Aorta (tissue), 5 donors: ENCODE measurements at regions of chr13 and their contacts with region 1.

Region 1: GRCh38 chr13:80363890-80364503 is 23.1 kb upstream of the SPRY2 start:
- DNase-seq: no peak
- ATAC-seq: no peak
- H3K4me3 ChIP-seq: no peak overlapping the region
- H3K27ac ChIP-seq: no peak overlapping the region
- H3K4me1 ChIP-seq: no peaks in the 10 kb centered on the region
- H3K27me3 ChIP-seq: no peaks in the 10 kb centered on the region

Region 2: DNA sequence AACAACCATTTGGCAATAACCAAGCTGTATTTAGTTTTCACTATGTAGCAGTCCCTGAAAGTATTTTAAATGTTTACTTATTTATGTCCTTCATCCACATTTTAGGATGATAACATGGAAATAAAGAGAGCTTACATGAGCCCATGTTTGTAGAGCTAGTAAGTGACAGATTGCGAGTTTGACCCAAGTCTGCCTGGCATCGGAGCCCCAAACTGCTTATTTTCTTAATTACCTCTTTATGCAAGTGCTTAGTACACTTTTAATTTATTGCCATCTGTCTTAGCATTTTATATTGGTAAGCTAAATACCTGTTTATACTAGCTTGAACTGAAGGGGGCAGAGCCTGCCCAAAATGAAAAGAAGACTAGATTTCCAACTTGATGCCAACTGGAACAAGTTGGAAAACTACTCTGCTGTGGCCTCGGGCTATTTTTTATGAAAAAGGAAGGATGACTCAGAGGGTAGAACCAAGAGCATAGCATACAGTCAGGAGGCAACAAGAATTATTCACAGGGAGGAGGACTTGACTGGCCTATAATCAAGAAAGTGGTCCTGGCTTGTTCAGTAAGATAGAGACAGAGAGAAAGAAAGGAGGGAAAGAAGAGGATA is 732.8 kb before region 1 on chr13:
- intact Hi-C with region 1: loop called in 1 of 2 experiments (anchors 10 kb)
- DNase-seq: no peak
- ATAC-seq: no peak
- H3K4me3 ChIP-seq: no peak overlapping the region
- H3K27ac ChIP-seq: no peak overlapping the region
- H3K4me1 ChIP-seq: peaks cover 0 to 2% of the 10 kb centered on the region in 2 donors
- H3K27me3 ChIP-seq: no peaks in the 10 kb centered on the region

Region 3: GRCh38 chr13:79679334-79679733 is 684.7 kb before region 1 on chr13:
- intact Hi-C with region 1: loop called (anchors 10 kb)
- DNase-seq: peak; percentile 73 to 82
- ATAC-seq: peak; percentile 82
- H3K4me3 ChIP-seq: no peak overlapping the region
- H3K27ac ChIP-seq: no peak overlapping the region
- H3K4me1 ChIP-seq: peaks cover 0 to 1% of the 10 kb centered on the region in 2 donors
- H3K27me3 ChIP-seq: no peaks in the 10 kb centered on the region

Region 4: GRCh38 chr13:79775830-79776229 is 588.2 kb before region 1 on chr13:
- intact Hi-C with region 1: loop called (anchors 5 kb)
- DNase-seq: no peak
- ATAC-seq: no peak
- H3K4me3 ChIP-seq: no peak overlapping the region
- H3K27ac ChIP-seq: no peak overlapping the region
- H3K4me1 ChIP-seq: peaks cover 0 to 2% of the 10 kb centered on the region in 2 donors
- H3K27me3 ChIP-seq: no peaks in the 10 kb centered on the region